Left cardiac atrium (tissue), 4 donors: ENCODE measurements at regions of chr1 and their contacts with region 1.

Region 1: DNA sequence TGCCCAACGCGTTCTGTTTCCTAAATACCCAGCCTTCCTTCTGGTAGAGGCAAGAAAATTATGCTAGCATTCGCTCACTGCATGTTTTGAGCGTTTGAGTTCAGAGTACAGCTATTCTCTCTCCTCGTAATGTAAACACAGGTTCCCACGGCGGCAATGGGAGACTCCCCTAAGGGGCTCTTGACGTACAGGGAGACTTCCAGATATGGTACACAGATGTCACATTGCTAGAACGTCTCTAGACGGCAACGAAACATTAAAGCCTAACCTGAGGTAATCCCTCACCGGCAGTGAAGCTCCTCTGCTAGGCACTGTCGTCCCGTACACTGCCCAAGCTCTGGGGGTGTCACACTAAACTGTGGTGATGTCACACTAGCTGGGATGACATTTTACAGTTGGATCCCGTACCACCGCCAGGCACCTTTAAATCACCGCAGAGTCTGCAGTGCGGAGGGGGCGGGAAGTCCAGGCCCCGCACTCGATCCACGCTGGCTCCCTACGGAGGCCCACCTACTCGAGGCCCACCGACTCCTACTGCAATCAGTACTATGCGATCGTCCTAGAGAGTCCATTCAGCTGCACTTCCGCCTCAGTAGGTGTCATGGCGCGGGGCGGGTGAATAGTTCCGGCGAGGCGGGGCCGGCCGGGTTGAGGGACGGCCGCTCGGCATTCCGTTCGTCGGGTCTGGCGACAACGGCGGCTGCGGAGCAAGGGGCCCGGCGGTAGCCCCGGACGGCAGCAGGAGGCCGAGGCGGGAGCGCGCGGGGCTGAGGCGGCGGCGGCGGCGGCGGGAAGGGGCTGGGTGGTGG is at the start of gene HIPK1:
- DNase-seq: peak; percentile 95
- ATAC-seq: peak; percentile 94 to 96
- total RNA-seq, gene HIPK1: 59.4 to 72.0 TPM

Region 2: DNA sequence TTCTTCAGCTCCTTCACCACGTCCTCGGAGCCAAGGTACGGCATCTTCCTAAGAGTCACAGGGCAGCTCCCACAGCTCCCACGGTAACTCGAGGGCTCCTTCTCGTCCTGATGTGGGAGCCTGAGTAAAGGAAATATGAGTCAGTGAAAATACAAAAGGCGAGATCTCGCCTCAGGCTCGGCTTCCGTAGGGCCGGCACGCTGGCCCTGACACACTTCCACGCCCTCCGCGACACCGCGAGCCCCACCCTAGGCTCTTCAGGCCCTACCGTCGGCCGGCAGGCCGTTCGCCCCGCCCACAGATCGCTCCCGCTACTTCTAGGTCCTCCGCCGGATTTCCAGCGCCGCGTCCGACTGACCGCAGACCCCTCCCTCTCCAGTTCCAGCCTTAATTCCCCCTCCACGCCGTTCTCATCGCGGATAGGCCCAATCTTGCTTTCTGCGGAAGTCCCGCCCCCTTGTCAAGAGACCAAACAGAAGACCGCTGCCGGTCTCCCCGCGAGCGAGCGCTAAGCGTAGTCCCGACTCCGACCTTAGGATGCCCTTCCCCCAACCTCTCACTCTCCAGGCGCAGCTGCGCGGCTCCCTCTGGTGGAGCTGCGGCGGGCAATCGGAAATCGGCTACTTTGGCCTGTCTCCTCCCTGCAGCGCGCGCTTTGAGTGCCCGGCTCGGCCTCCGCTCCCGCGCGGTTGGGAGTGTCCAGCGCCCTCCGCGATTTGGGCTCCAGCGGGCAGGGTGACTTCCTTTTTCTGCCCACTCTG is 24.3 kb before region 1 on chr1 and contains the starts of genes AP4B1 and DCLRE1B:
- intact Hi-C with region 1: loop called in 1 of 2 experiments (anchors 1 kb)
- DNase-seq: peak; percentile 100
- ATAC-seq: peak; percentile 97 to 98
- total RNA-seq, gene AP4B1: 11.9 to 12.0 TPM
- total RNA-seq, gene DCLRE1B: 3.6 to 4.2 TPM

Region 3: DNA sequence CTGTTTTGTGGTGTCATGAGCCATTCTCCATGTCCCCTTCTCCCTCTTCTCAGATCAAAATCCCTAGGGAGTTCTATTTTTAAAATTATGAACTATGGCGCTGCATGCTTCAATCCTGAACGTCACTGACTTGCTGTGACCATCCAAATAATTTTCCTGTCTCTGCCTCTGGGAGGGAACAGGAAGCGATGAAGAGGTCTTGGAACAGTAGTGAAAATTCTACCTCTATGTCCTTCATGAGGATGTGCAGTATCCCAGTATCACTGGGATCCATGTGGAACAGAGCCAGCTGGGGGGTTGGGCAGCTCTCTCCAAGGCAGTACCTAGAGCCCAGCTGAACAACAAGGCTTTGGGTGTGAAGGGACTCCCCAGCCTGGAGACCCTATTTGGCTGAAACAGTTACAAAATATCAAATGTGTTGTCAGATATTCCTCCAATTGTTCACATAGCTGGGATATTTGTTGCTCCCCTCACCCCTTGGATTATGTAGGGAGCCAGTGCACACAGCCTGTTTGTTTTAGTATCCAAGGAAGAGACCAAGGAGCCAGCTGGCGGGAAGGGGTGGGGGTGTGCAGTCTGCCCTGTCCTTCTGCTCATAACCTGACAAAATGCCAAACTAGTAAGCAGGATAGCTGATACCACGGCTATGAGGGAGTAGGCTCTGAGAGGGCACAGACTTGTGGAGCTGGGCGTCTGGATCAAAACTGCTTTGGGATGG is 16.4 kb before region 1 on chr1:
- intact Hi-C with region 1: loop called in 1 of 2 experiments (anchors 2 kb)
- DNase-seq: peak; percentile 41
- ATAC-seq: peak; percentile 92 to 95